ENCODE measurements at regions of chr3 and their contacts with region 1.

Region 1: GRCh38 chr3:72829701-72830100 is 18.5 kb downstream of the SHQ1 start:
- DNase-seq: no peak
- ATAC-seq: no peak
- H3K4me3 ChIP-seq: no peak overlapping the region
- H3K27ac ChIP-seq: no peak overlapping the region
- H3K4me1 ChIP-seq: peaks cover 0 to 12% (median 0%) of the 10 kb centered on the region in 12 donors
- H3K27me3 ChIP-seq: no peaks in the 10 kb centered on the region
- CTCF ChIP-seq: no peak
- POLR2A ChIP-seq: no peak

Region 2: GRCh38 chr3:71718072-71718471 is 1111.6 kb before region 1 on chr3:
- intact Hi-C with region 1: loop called in 6 of 10 experiments (anchors 5 to 10 kb)
- DNase-seq: no peak
- ATAC-seq: no peak
- H3K4me3 ChIP-seq: no peak overlapping the region
- H3K27ac ChIP-seq: no peak overlapping the region
- H3K4me1 ChIP-seq: peaks cover 0 to 66% (median 0%) of the 10 kb centered on the region in 12 donors
- H3K27me3 ChIP-seq: no peaks in the 10 kb centered on the region
- CTCF ChIP-seq: no peak
- POLR2A ChIP-seq: no peak

Region 3: GRCh38 chr3:71955240-71956068 is 874.2 kb before region 1 on chr3:
- intact Hi-C with region 1: loop called in 6 of 10 experiments (anchors 5 kb)
- DNase-seq: peak; percentile 62 to 75 (median 72)
- ATAC-seq: peak in 3 of 4 donors; percentile 62 to 76 (median 76)
- H3K4me3 ChIP-seq: no peak overlapping the region
- H3K27ac ChIP-seq: no peak overlapping the region
- H3K4me1 ChIP-seq: peaks cover 0 to 10% (median 5%) of the 10 kb centered on the region in 12 donors
- H3K27me3 ChIP-seq: peaks cover 0 to 8% (median 0%) of the 10 kb centered on the region in 9 donors
- CTCF ChIP-seq: peak; percentile 49 to 84 (median 74)
- POLR2A ChIP-seq: no peak

Region 4: GRCh38 chr3:72791161-72791560 is 38.5 kb before region 1 on chr3:
- intact Hi-C with region 1: no loop called
- DNase-seq: no peak
- ATAC-seq: no peak
- H3K4me3 ChIP-seq: no peak overlapping the region
- H3K27ac ChIP-seq: no peak overlapping the region
- H3K4me1 ChIP-seq: peaks cover 0 to 7% (median 0%) of the 10 kb centered on the region in 12 donors
- H3K27me3 ChIP-seq: no peaks in the 10 kb centered on the region
- CTCF ChIP-seq: no peak
- POLR2A ChIP-seq: no peak

Region 5: GRCh38 chr3:72872183-72872582 is 42.5 kb after region 1 on chr3:
- intact Hi-C with region 1: no loop called
- DNase-seq: no peak
- ATAC-seq: peak in 2 of 4 donors; percentile 62 to 89
- H3K4me3 ChIP-seq: no peak overlapping the region
- H3K27ac ChIP-seq: peak overlapping the region in 1 of 12 donors; percentile 18
- H3K4me1 ChIP-seq: no peaks in the 10 kb centered on the region
- H3K27me3 ChIP-seq: peaks cover 0 to 4% (median 0%) of the 10 kb centered on the region in 9 donors
- CTCF ChIP-seq: no peak
- POLR2A ChIP-seq: no peak